Common myeloid progenitor, CD34-positive (primary cell): ENCODE measurements at regions of chr9 and their contacts with region 1.

Region 1: DNA sequence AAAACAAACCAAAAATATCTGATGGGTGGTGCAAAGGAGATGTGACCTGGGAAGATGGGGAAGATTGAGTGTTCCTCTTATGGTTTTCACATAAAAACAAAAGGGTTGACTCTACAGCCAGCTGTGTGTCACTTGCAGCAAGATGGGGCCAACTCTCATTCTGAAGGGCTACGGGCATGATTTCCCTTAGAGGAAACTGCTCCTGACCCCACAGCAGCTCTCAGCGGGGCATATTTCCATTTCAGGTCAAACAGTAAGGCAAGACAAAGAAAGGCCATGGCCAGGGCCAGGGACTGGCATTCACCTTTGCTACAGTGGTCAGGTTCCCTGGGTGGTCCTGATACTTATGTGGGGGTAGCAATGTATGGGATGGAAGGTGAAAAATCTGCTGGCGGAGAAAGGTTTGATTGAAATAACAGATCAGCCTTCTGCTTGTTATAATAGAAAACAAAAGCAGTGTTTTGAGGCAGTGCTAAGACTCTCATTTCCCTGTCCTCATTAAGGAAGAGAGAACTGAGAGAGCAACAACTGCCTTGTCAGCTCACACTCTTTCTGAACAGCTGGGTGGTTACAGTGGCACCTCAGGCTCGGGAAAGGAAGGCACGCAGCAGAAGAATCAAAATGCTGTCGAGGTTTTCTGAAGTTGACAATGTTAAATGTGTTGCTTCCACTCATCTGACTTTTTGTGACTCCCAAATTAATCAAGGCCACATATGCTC is 120.7 kb upstream of the PCA3 start:
- DNase-seq: peak in 1 of 3 donors; percentile 47
- H3K4me3 ChIP-seq: no peak overlapping the region
- H3K27ac ChIP-seq: no peak overlapping the region
- H3K4me1 ChIP-seq: peaks cover 14 to 31% (median 18%) of the 10 kb centered on the region in 4 experiments
- H3K27me3 ChIP-seq: no peaks in the 10 kb centered on the region

Region 2: DNA sequence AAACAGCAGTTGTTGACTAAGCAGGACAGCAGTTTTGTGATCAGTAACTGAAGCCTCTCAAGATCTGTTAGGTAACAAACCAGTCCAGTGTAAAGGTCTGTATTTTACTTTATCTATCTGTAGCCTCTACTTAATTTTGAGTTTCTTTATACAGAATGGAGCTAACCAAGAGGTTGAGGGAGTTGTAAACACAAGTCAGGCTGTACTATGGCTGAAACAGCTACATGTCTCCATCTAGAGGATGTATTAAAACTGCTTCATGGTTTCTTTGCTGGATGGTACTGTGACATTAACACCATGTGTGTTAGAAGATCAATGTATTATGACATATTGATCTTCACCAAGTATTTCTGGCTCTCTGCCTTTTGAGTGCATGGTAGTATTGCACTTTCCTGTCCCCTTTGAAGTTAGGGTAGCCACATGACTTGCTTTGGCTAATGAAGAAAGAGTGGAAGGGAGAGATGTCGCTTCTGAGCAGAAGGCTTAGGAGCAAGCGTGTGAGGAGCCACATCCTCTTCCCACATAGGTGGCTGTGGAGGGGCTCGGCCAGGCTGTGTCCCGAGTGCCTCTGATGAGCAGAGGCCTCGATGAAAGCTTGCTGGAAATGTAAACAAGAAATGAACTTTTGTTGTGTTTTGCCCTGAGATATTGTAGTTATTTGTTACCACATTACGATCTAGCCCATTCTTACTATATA is 15.1 kb after region 1 on chr9:
- CTCF ChIA-PET with region 1: interaction called, 17 read pairs
- POLR2A ChIA-PET with region 1: no interaction called
- DNase-seq: peak; percentile 69 to 82 (median 82)
- H3K4me3 ChIP-seq: no peak overlapping the region
- H3K27ac ChIP-seq: no peak overlapping the region
- H3K4me1 ChIP-seq: peaks cover 35 to 58% (median 52%) of the 10 kb centered on the region in 4 experiments
- H3K27me3 ChIP-seq: no peaks in the 10 kb centered on the region

Region 3: DNA sequence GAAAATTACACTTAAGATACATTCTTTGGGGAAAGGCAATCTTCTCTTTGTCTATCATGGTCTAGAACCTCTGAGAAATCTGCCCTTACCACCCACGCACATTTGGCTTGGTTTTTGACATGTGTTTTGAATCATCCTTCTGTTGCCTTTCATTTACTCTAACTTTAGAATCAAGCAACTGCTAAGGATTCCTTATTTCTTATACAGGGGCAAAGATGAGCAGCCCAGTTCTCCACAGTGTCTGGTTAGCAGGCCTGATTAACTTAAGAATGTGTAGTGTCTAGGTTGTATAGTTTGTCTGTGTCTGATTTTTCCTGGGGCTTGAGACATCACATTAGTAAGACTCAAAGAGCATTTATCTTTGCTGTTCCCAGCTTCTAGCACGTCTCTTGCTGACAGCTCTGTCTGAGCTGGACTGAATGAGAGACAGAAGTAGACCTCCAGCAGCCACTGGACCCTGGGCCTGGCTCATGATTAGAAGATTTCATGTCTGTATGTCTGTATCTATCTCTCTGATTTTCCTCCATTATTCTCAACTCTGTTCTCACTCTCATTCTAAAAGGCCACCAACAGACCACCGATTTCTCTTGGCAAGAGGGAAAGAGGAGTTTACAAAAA is 88.9 kb after region 1 on chr9:
- CTCF ChIA-PET with region 1: no interaction called
- POLR2A ChIA-PET with region 1: no interaction called
- DNase-seq: no peak
- H3K4me3 ChIP-seq: no peak overlapping the region
- H3K27ac ChIP-seq: no peak overlapping the region
- H3K4me1 ChIP-seq: no peaks in the 10 kb centered on the region
- H3K27me3 ChIP-seq: peaks cover 0 to 4% (median 0%) of the 10 kb centered on the region in 5 experiments